T-cell (primary cell): ENCODE measurements at regions of chr15 and their contacts with region 1.

Region 1: DNA sequence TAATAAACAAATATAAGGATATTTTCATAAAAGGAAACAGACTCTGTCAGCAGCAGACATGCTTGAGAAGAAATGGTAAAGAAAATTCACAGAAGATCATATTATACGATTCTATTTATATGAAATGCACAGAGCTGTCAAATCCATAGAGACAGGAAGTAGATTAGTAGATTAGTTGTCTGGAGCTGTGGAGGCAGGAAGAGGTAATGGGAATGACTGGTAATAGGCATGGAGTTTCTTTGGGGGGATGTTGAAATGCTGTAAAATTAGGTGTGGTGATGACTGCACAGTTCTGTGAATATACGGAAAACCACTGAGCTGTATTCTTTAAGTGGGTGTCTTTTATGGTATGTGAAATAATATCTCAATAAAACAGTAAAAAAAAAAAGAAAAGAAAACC is 35.3 kb downstream of the CEP152 start:
- DNase-seq: no peak
- ATAC-seq: no peak
- H3K4me3 ChIP-seq: no peak overlapping the region
- H3K4me3 Mint-ChIP-seq: no peak overlapping the region
- H3K27ac ChIP-seq: no peak overlapping the region
- H3K27ac Mint-ChIP-seq: no peak overlapping the region
- H3K4me1 ChIP-seq: no peaks in the 10 kb centered on the region
- H3K4me1 Mint-ChIP-seq: no peaks in the 10 kb centered on the region
- H3K27me3 ChIP-seq: no peaks in the 10 kb centered on the region
- H3K27me3 Mint-ChIP-seq: no peaks in the 10 kb centered on the region

Region 2: DNA sequence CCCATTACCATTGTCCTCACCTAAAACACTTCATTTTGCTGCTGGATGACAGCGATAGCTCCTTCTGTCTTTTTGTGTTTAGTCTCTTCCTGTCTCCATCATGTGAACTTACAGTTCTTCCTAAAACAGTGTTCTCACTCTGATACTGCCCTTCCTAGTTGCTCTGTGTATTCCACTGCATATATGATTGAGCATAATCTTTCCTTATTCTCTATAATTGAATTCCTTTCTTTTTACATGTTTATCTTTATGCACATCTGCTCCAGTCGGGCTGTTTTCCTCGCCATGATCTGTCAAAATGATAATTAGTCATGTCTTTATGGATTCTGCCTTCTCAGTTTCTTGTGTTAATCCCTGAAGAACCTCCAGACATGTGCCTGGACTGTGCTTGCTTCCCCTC is 1463.4 kb before region 1 on chr15:
- CTCF ChIA-PET with region 1: no interaction called
- POLR2A ChIA-PET with region 1: no interaction called
- DNase-seq: no peak
- ATAC-seq: no peak
- H3K4me3 ChIP-seq: no peak overlapping the region
- H3K4me3 Mint-ChIP-seq: no peak overlapping the region
- H3K27ac ChIP-seq: no peak overlapping the region
- H3K27ac Mint-ChIP-seq: no peak overlapping the region
- H3K4me1 ChIP-seq: no peaks in the 10 kb centered on the region
- H3K4me1 Mint-ChIP-seq: no peaks in the 10 kb centered on the region
- H3K27me3 ChIP-seq: no peaks in the 10 kb centered on the region
- H3K27me3 Mint-ChIP-seq: no peaks in the 10 kb centered on the region

Region 3: GRCh38 chr15:48792408-48792807 is 16.9 kb after region 1 on chr15:
- CTCF ChIA-PET with region 1: interaction called in 1 of 2 experiments, 12 read pairs
- POLR2A ChIA-PET with region 1: no interaction called
- DNase-seq: no peak
- ATAC-seq: no peak
- H3K4me3 ChIP-seq: no peak overlapping the region
- H3K4me3 Mint-ChIP-seq: no peak overlapping the region
- H3K27ac ChIP-seq: no peak overlapping the region
- H3K27ac Mint-ChIP-seq: no peak overlapping the region
- H3K4me1 ChIP-seq: no peaks in the 10 kb centered on the region
- H3K4me1 Mint-ChIP-seq: peaks cover 4 to 18% (median 11%) of the 10 kb centered on the region in 3 donors
- H3K27me3 ChIP-seq: no peaks in the 10 kb centered on the region
- H3K27me3 Mint-ChIP-seq: no peaks in the 10 kb centered on the region